Upper lobe of right lung (tissue), 1 donor: ENCODE measurements at regions of chr10 and their contacts with region 1.

Region 1: DNA sequence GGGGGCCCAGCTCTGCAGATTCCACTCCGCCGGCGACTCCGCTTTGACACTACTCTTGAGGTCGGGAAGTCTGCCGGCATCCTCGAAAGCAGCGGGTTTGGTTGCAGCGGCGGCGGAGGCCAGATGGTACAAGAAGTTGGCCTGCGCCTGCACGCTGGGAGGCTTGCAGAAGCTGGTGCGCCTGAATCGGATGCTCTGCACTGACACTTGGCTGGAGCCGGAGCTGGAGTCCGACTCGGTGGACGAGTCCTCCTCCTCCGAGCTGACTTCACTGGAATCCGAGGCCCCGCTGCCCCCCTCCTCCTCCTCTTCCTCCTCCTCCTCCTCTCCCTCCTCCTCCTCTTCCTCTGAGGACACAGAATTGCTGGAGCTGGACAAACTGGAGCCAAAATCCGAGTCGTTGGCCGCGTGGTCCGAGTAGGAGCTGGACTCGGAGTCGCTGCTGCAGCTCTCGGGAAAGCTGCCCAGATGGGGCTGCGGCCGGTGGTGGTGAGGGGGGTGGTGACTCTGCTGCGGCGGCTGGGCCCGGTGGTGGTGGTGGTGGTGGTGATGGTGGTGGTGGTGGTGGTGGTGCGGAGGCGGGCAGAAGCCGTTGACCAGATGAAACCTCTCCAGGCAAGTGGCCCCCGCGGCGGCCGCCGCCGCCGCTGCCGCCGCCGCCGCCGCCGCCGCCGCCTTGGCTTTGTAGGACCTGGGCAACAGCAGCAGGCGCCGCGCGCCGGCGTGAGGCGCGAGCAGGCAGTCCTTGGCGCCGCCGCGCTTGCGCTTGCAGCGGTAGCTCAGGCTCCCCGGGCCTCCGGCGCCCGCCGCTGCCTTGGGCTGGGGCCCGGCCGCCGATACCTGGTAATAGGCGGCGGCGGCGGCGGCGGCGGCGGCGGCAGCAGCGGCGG is 9.0 kb downstream of the SKIDA1 start:
- DNase-seq: peak; percentile 84
- ATAC-seq: peak; percentile 78
- H3K4me3 ChIP-seq: peak overlapping the region; percentile 60
- H3K27ac ChIP-seq: peak overlapping the region; percentile 38
- H3K4me1 ChIP-seq: peaks cover 15% of the 10 kb centered on the region
- H3K27me3 ChIP-seq: peaks cover 58% of the 10 kb centered on the region
- CTCF ChIP-seq: no peak

Region 2: GRCh38 chr10:21372651-21373410 is 143.7 kb before region 1 on chr10:
- intact Hi-C with region 1: no loop called
- DNase-seq: no peak
- ATAC-seq: peak; percentile 96
- H3K4me3 ChIP-seq: no peak overlapping the region
- H3K27ac ChIP-seq: no peak overlapping the region
- H3K4me1 ChIP-seq: peaks cover 5% of the 10 kb centered on the region
- H3K27me3 ChIP-seq: no peaks in the 10 kb centered on the region
- CTCF ChIP-seq: no peak

Region 3: DNA sequence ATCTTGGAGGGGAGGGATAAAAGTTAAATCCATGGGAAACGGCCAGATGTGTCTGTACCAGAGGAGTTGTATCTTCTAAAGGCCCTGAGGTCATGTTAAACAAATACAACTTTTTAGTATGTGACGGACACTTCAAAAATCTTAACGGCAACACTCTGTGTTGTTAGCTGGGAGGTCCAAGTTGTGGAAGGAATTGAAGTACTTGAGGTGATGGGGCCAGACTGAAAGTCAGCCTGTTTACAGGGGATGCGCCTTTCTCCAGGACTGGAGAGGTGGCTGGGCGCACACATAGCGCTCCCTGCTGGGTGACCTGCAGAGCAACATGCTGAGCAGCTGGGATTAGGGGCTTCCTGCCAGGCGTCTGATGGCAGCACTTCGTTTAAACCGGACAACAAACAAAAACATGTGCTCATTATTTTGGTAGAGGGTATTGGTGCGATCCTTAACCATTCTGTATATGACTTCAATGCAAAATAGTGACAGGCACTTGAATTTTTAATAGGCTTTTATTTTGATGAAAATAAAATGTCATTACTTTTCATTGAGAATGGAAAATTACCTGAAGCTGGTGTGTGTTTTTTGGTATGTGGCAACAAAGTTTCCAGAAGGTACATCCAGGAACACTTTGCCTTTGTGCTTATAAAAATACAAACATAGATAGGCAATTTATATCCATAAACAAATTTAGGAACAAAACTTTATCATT is 215.7 kb after region 1 on chr10:
- intact Hi-C with region 1: loop called (anchors 10 kb)
- DNase-seq: no peak
- ATAC-seq: peak; percentile 87
- H3K4me3 ChIP-seq: no peak overlapping the region
- H3K27ac ChIP-seq: no peak overlapping the region
- H3K4me1 ChIP-seq: peaks cover 7% of the 10 kb centered on the region
- H3K27me3 ChIP-seq: no peaks in the 10 kb centered on the region
- CTCF ChIP-seq: peak; percentile 77

Region 4: DNA sequence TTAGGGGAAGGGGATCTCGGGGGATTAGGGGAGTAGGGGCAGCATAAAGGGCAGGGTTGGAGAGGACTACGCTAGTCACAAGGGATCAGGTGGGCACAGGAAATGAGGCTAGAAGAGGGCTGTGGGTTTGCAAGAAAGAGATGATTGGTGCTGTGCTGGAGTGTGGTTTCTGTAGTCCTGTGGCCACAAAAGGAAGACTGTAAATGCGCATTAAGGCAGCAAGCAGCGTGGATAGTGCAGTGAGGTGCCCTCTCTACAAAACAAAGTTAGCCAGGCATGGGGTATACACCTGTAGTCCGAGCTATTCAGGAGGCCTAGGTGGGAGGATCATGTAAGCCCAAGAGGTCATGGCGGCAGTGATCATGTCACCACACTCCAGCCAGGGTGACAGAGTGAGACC is 229.6 kb after region 1 on chr10:
- intact Hi-C with region 1: no loop called
- DNase-seq: no peak
- ATAC-seq: no peak
- H3K4me3 ChIP-seq: no peak overlapping the region
- H3K27ac ChIP-seq: no peak overlapping the region
- H3K4me1 ChIP-seq: no peaks in the 10 kb centered on the region
- H3K27me3 ChIP-seq: no peaks in the 10 kb centered on the region
- CTCF ChIP-seq: no peak

Region 5: GRCh38 chr10:21927631-21928353 is 411.3 kb after region 1 on chr10:
- intact Hi-C with region 1: no loop called
- DNase-seq: no peak
- ATAC-seq: no peak
- H3K4me3 ChIP-seq: no peak overlapping the region
- H3K27ac ChIP-seq: no peak overlapping the region
- H3K4me1 ChIP-seq: no peaks in the 10 kb centered on the region
- H3K27me3 ChIP-seq: no peaks in the 10 kb centered on the region
- CTCF ChIP-seq: no peak